ENCODE measurements at regions of chr3 and their contacts with region 1.

Region 1: GRCh38 chr3:27253831-27254230 is 115.4 kb downstream of the NEK10 start:
- DNase-seq: peak; percentile 17 to 66
- H3K4me3 ChIP-seq: no peak overlapping the region
- H3K27ac ChIP-seq: no peak overlapping the region
- H3K4me1 ChIP-seq: no peaks in the 10 kb centered on the region
- H3K27me3 ChIP-seq: peaks cover 0 to 1% (median 0%) of the 10 kb centered on the region in 4 experiments; a peak in 1 of 7 replicates
- CTCF ChIP-seq: peak; percentile 55 to 80 (median 66)
- EP300 ChIP-seq: no peak
- POLR2A ChIP-seq: no peak
- RAD21 ChIP-seq: peak; percentile 85 to 87

Region 2: DNA sequence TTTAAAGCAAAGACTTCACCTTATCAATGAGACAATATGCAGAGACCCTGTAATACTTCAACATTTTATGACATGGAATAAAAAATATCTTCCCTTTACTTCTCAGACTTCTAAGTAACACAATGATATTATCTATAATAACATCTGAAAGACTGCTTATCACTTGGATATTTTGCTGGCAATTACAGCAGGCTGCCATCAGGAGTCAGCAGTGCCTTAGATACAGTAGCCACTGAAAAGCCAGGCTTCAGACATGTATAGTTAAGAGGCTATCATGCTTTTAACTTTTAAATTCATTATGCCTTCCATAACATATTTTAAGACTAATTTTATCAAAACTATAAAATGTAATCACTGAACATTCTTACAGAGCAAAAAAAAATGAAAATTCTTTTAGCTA is 112.2 kb before region 1 on chr3:
- CTCF ChIA-PET with region 1: interaction called, 39 read pairs
- POLR2A ChIA-PET with region 1: no interaction called
- DNase-seq: no peak
- H3K4me3 ChIP-seq: no peak overlapping the region
- H3K27ac ChIP-seq: no peak overlapping the region
- H3K4me1 ChIP-seq: no peaks in the 10 kb centered on the region
- H3K27me3 ChIP-seq: no peaks in the 10 kb centered on the region
- CTCF ChIP-seq: peak in 2 of 3 experiments; percentile 26 to 44; a peak in 2 of 4 replicates
- EP300 ChIP-seq: no peak
- POLR2A ChIP-seq: no peak
- RAD21 ChIP-seq: peak; percentile 48 to 58

Region 3: DNA sequence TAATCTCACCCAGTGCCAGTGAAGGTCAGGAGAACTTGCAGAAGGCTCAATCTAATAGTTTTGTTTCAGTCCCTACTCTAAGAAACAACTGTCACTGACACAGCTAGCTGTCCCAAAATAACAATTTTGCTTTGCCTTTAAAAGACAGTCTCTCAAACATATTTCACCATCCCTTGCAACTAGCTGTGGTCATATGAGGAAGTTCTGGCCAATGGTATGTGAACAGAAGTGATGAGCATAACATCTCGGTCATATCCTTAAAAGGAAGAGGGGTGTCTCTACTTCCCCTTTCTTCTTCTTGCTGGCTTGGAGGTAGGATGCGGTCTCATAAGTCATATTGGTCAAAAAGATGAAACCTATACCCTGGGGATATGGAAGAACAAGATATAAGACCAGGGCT is 82.7 kb before region 1 on chr3:
- CTCF ChIA-PET with region 1: interaction called, 22 read pairs
- POLR2A ChIA-PET with region 1: no interaction called
- DNase-seq: no peak
- H3K4me3 ChIP-seq: no peak overlapping the region
- H3K27ac ChIP-seq: no peak overlapping the region
- H3K4me1 ChIP-seq: no peaks in the 10 kb centered on the region
- H3K27me3 ChIP-seq: no peaks in the 10 kb centered on the region
- CTCF ChIP-seq: no peak
- EP300 ChIP-seq: no peak
- POLR2A ChIP-seq: no peak
- RAD21 ChIP-seq: no peak

Region 4: DNA sequence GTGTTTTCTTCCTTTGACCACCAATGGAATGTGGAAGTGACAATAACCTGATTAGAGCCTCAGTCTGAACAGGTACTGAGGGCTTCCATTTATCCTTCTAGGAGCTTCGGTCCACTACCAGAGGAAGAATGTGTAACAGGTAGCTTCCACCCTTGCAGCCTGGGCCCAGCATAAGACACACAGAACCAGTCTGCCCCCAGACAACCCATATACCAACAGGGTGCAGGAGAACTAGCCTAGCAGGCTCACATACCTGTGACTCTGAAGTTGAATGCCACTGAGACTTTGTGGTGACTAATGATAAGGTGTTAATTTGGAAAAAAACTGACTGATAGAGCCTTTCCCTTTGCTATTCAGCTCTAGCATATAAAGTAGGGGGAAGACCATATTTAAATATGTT is 50.9 kb before region 1 on chr3:
- CTCF ChIA-PET with region 1: interaction called, 10 read pairs
- POLR2A ChIA-PET with region 1: no interaction called
- DNase-seq: no peak
- H3K4me3 ChIP-seq: no peak overlapping the region
- H3K27ac ChIP-seq: no peak overlapping the region
- H3K4me1 ChIP-seq: 0 out of 7 replicates have a peak, but pooled peaks cover 0 to 3% (median under 1%) of the 10 kb centered on the region in 4 experiments
- H3K27me3 ChIP-seq: no peaks in the 10 kb centered on the region; a peak in 1 of 7 replicates
- CTCF ChIP-seq: no peak
- EP300 ChIP-seq: no peak
- POLR2A ChIP-seq: no peak
- RAD21 ChIP-seq: no peak

Region 5: DNA sequence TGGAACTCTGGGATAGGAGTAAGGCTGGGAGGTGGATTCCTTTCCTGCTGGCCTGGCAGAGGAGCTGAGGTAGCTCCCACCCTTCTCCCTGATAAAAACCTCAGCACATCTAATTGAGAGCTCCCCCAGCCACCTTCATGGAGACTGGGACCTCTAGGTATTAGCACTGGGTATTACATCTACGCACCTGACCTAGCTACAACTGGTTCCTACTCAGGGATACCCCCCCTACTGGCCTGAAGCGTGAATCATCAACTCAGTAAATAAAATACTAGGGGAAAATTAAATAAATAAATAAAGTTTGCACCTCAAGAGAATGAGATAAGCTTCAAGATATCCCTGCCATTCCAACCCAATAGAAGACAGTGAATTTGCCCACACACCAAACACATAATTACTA is 25.0 kb before region 1 on chr3:
- CTCF ChIA-PET with region 1: interaction called, 23 read pairs
- POLR2A ChIA-PET with region 1: no interaction called
- DNase-seq: peak in 1 of 2 experiments; percentile 23
- H3K4me3 ChIP-seq: no peak overlapping the region
- H3K27ac ChIP-seq: no peak overlapping the region
- H3K4me1 ChIP-seq: no peaks in the 10 kb centered on the region
- H3K27me3 ChIP-seq: no peaks in the 10 kb centered on the region
- CTCF ChIP-seq: peak; percentile 14 to 95 (median 69)
- EP300 ChIP-seq: no peak
- POLR2A ChIP-seq: no peak
- RAD21 ChIP-seq: peak; percentile 56 to 69

Region 6: GRCh38 chr3:27319847-27320526 is 66.2 kb after region 1 on chr3:
- CTCF ChIA-PET with region 1: no interaction called
- POLR2A ChIA-PET with region 1: no interaction called
- DNase-seq: no peak
- H3K4me3 ChIP-seq: no peak overlapping the region
- H3K27ac ChIP-seq: no peak overlapping the region
- H3K4me1 ChIP-seq: no peaks in the 10 kb centered on the region
- H3K27me3 ChIP-seq: peaks cover 0 to under 1% (median 0%) of the 10 kb centered on the region in 4 experiments; a peak in 1 of 7 replicates
- CTCF ChIP-seq: no peak
- EP300 ChIP-seq: no peak
- POLR2A ChIP-seq: no peak
- RAD21 ChIP-seq: no peak